Activated naive CD4-positive, alpha-beta T cell treated with anti-CD3 and anti-CD28 coated beads for 36 hours (primary cell): ENCODE measurements at regions of chr2 and their contacts with region 1.

Region 1: DNA sequence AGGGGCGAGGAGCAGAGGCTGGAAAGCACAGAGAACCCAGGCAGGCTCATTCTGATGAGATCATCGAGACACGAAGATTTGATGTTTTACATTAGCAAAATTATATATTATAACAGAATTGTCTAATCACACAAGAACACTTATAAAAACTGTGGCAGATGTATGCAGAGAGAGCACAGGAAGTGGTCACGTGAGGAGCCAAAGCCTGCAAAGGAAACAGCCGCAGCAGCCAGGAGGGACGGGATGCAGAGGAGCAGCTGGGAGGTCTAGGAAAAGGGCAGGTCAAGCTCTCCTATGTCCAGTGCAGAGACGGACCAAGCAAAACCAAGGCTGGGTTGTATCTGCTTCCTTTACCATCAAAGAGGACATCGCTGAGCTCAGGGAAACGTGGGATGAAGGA is 355.1 kb upstream of the MYT1L start:
- DNase-seq: peak; percentile 57
- H3K4me3 Mint-ChIP-seq: peak overlapping the region; percentile 56
- H3K27ac Mint-ChIP-seq: no peak overlapping the region
- H3K4me1 Mint-ChIP-seq: peaks cover 81% of the 10 kb centered on the region
- H3K27me3 Mint-ChIP-seq: no peaks in the 10 kb centered on the region

Region 2: GRCh38 chr2:2646433-2647051 is 39.7 kb before region 1 on chr2:
- CTCF ChIA-PET with region 1: no interaction called
- intact Hi-C with region 1: loop called (anchors 1 kb)
- DNase-seq: peak; percentile 75
- H3K4me3 Mint-ChIP-seq: peak overlapping the region; percentile 8
- H3K27ac Mint-ChIP-seq: peak overlapping the region; percentile 69
- H3K4me1 Mint-ChIP-seq: peaks cover 40% of the 10 kb centered on the region
- H3K27me3 Mint-ChIP-seq: no peaks in the 10 kb centered on the region

Region 3: DNA sequence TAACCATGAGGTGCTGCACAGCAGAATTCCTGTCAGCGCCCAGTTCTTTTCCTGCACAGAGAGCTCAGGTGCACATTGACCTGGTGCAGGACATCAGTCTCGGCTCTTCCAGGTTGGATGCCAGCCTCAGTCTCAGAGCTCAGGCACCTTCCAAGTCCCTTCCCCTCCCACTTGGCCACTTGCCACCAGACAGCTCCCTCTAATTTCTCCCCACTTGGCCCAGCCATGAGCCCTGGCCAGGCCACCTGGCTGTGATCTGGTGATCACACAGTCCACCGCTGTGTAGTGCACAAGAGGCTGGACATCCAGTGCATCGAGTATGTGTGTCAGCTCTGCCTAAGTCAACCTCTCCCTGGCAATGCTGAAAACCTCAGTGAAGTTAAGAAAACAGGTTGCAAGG is 18.5 kb before region 1 on chr2:
- CTCF ChIA-PET with region 1: no interaction called
- intact Hi-C with region 1: no loop called
- DNase-seq: no peak
- H3K4me3 Mint-ChIP-seq: no peak overlapping the region
- H3K27ac Mint-ChIP-seq: no peak overlapping the region
- H3K4me1 Mint-ChIP-seq: no peaks in the 10 kb centered on the region
- H3K27me3 Mint-ChIP-seq: no peaks in the 10 kb centered on the region